ENCODE measurements at regions of chr4 and their contacts with region 1.

Region 1: GRCh38 chr4:155787113-155787710 is 28.4 kb downstream of the GUCY1B1 start:
- DNase-seq: peak; percentile 2
- H3K4me3 Mint-ChIP-seq: no peak overlapping the region
- H3K27ac Mint-ChIP-seq: no peak overlapping the region
- H3K4me1 Mint-ChIP-seq: no peaks in the 10 kb centered on the region
- H3K27me3 Mint-ChIP-seq: no peaks in the 10 kb centered on the region

Region 2: DNA sequence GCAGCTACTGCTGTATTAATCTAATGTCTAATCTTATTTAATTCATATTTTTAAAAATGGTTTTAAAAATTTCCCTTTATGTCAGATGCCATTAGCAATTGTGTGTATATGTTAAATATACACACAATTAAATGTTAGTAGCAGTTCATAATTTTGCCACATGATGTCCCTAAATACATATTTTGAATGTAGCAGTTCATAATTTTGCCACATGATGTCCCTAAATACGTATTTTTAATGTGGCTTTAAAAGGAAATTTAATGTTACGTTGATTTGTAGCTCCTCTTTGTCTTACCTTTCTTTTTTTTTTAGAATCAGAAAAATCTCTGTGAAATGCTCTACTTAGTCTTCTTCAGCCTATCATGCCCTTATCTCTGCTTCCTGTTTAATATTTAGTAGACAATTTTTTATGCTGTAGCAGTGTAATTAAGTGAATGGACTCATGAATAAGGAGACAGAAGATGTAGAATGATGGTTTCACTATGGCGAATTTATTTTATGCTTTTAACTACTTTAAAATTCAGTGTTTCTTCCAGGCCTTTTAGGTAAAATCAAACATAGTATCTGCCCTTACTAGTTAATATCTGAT is 980.1 kb before region 1 on chr4:
- intact Hi-C with region 1: loop called (anchors 2 kb)
- DNase-seq: no peak
- H3K4me3 Mint-ChIP-seq: no peak overlapping the region
- H3K27ac Mint-ChIP-seq: no peak overlapping the region
- H3K4me1 Mint-ChIP-seq: no peaks in the 10 kb centered on the region
- H3K27me3 Mint-ChIP-seq: peaks cover 5% of the 10 kb centered on the region

Region 3: DNA sequence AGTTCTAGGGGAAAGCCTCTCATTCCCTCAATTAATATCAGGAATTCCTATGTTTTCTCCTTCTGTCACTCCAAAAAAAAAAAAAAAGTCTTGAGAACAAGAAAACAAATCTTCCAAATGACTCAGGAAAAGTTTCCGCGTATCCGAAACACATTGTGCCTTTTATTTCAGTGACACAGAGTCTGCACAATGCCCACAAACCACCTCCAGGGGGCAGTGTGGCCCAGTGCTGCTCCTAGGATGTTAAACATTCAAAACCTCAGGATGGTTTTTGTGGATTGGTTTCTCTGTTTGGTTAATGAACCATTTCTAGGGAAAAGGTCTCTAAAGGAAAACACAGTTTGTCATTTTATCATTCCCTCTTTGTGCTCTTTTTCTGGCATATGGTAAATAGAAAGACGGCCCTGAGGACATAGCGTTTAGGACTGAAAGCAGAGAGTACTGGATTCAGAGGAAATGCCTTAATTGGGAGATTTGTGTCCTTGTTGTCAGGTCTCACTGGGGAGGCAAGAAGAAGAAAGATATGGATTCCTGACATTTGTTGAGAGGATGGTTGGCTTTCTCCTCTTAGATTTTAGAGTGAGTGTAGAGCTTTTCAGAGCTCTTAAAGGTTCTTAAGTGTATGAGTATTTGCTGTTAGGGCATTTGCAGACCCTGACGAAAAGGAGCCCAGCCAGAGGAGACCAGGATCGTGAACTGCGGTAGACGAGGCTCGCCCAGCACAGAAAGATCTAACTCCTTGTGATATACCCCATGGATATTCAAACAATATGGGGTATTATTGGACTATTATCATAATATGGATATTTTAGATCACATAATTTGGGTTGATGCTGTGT is 344.7 kb before region 1 on chr4:
- intact Hi-C with region 1: loop called (anchors 1 kb)
- DNase-seq: peak; percentile 25
- H3K4me3 Mint-ChIP-seq: no peak overlapping the region
- H3K27ac Mint-ChIP-seq: no peak overlapping the region
- H3K4me1 Mint-ChIP-seq: peaks cover 6% of the 10 kb centered on the region
- H3K27me3 Mint-ChIP-seq: peaks cover 11% of the 10 kb centered on the region

Region 4: DNA sequence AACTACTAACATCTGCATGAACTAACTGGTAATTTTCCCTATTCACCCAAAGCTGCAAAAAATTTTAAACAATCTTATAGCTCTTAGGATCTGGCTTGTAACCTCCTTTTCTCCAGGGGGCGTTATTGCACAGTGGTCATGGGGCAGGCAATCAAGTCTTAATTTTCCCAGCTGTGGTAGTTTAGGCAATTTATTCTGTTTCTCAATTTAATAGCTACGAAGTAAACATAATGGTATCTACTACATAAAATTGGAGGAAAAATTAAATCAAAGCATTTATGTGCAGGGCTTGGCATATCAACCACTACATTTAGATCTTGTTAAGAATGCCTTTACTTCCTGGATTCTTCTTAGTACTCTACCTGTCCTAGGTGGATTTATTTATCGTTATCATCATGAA is 257.9 kb before region 1 on chr4:
- intact Hi-C with region 1: loop called (anchors 1 kb)
- DNase-seq: no peak
- H3K4me3 Mint-ChIP-seq: no peak overlapping the region
- H3K27ac Mint-ChIP-seq: no peak overlapping the region
- H3K4me1 Mint-ChIP-seq: no peaks in the 10 kb centered on the region
- H3K27me3 Mint-ChIP-seq: no peaks in the 10 kb centered on the region

Region 5: DNA sequence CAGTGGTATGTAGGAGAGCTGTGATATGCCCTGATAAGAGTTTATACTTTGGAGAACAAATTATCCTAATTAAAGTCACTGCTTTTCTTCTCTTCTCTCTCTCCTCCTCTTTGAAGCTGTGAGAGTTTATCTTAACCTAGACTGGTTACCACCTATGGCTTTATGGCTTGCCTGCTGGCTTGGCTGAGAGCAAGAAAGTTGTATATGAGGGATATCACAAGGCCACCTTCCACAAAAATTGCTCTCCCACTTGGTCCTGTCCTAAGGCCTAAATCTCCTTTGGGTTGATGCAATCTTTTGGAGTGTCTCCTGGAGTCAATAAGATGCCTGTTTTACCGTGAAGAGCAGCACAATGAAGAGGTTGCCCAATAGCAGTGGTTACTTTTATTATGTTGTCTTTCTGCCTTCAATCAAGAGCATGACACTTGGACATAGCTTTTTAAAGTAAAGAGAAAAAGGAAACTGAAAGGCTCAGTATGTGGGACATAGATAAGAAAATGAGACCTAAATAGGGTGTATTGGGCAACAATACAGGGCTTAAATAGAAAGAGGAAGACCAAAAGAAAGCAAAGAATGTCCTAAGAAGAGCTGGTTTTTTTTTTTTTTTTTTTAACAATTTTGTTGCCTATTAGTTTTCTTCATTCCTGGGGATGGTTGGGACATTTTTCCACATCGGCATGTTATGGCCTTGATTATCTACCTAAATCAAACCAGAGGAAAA is 111.3 kb before region 1 on chr4:
- intact Hi-C with region 1: loop called (anchors 10 kb)
- DNase-seq: no peak
- H3K4me3 Mint-ChIP-seq: no peak overlapping the region
- H3K27ac Mint-ChIP-seq: no peak overlapping the region
- H3K4me1 Mint-ChIP-seq: no peaks in the 10 kb centered on the region
- H3K27me3 Mint-ChIP-seq: peaks cover 12% of the 10 kb centered on the region

Region 6: GRCh38 chr4:156053174-156053573 is 266.0 kb after region 1 on chr4:
- intact Hi-C with region 1: no loop called
- DNase-seq: no peak
- H3K4me3 Mint-ChIP-seq: no peak overlapping the region
- H3K27ac Mint-ChIP-seq: no peak overlapping the region
- H3K4me1 Mint-ChIP-seq: no peaks in the 10 kb centered on the region
- H3K27me3 Mint-ChIP-seq: no peaks in the 10 kb centered on the region